Common myeloid progenitor, CD34-positive (primary cell): ENCODE measurements at regions of chr12 and their contacts with region 1.

Region 1: GRCh38 chr12:29317556-29318363 is 63.2 kb downstream of the ERGIC2 start:
- DNase-seq: peak; percentile 86 to 90 (median 87)
- H3K4me3 ChIP-seq: peak overlapping the region in 3 of 7 experiments; percentile 20 to 65 (median 43)
- H3K27ac ChIP-seq: no peak overlapping the region
- H3K4me1 ChIP-seq: peaks cover 2 to 41% (median 19%) of the 10 kb centered on the region in 4 experiments
- H3K27me3 ChIP-seq: no peaks in the 10 kb centered on the region

Region 2: DNA sequence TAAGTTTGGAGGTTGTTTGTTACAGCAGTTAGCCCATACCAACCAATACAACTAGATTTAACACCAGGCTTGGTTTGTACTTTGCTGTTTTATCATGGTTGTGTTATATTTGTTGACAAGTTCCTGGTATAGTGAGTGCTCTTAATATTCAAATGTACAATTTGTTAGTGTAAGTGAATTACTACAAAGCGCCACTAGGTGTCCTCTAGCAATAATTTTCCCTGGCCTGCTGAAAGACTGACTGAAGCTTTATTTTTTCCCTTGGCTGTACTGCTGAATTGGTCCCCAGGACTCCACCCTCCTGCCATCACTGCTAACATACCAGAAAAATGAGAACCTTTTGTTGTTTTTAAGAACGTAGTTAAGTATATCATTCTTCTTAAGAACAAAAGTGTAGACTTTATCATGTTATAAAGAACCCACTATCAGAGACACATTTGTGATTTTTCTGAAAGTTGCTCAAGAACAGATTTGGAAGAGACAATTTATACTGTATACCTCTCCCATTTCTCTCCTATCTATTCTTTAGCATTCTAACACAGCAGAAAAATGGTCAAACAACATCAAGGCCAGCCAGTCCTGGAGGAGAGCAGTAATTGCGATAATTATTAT is 244.0 kb before region 1 on chr12:
- CTCF ChIA-PET with region 1: interaction called, 67 read pairs
- POLR2A ChIA-PET with region 1: no interaction called
- DNase-seq: peak; percentile 73 to 87 (median 82)
- H3K4me3 ChIP-seq: no peak overlapping the region
- H3K27ac ChIP-seq: no peak overlapping the region
- H3K4me1 ChIP-seq: peaks cover 4 to 17% (median 5%) of the 10 kb centered on the region in 4 experiments
- H3K27me3 ChIP-seq: no peaks in the 10 kb centered on the region

Region 3: GRCh38 chr12:29088611-29089219 is 229.0 kb before region 1 on chr12:
- CTCF ChIA-PET with region 1: interaction called, 10 read pairs
- POLR2A ChIA-PET with region 1: no interaction called
- DNase-seq: peak in 1 of 3 donors; percentile 33
- H3K4me3 ChIP-seq: no peak overlapping the region
- H3K27ac ChIP-seq: no peak overlapping the region
- H3K4me1 ChIP-seq: no peaks in the 10 kb centered on the region
- H3K27me3 ChIP-seq: no peaks in the 10 kb centered on the region

Region 4: GRCh38 chr12:29299633-29300032 is 18.1 kb before region 1 on chr12:
- CTCF ChIA-PET with region 1: interaction called, 15 read pairs
- POLR2A ChIA-PET with region 1: interaction called, 3 read pairs
- DNase-seq: peak in 2 of 3 donors; percentile 45 to 51
- H3K4me3 ChIP-seq: peak overlapping the region in 1 of 7 experiments; percentile 11
- H3K27ac ChIP-seq: no peak overlapping the region
- H3K4me1 ChIP-seq: peaks cover 0 to 12% (median 6%) of the 10 kb centered on the region in 4 experiments
- H3K27me3 ChIP-seq: no peaks in the 10 kb centered on the region